ENCODE measurements at regions of chr6 and their contacts with region 1.

Region 1: DNA sequence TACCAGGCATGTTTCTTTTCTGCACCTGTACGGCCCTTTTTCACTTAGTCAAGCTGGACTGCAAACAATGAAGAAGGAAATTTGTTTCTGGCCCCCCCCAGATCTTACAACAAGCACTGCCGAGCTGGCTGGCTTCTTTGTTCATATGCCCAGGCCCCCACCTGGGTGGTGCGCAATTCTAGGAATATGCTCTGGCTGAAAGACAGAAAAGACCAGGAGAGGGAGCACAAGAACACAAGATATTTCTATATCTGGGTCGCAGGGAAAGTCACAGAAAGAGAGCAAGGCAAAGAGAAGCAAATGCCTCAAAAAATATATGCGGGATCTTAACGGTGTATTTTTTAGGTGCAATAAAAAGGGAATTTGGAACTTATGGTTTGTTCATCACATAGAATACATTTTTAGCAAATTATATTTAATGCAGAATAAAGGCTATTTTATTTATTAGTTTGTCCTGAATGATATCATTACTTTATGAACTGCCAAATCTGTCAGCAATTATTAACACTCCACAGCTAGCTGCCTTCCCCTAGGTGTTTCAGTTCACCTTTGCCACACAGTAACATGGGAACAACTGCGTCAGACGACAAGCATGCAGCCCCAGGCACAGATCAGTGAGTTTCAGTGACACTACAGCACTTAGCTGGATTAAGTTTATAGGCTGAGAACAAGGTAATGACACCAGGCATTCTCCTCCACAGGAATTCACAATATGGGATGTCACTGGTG is 76.5 kb downstream of the GJA10 start:
- DNase-seq: peak; percentile 37
- ATAC-seq: peak; percentile 89
- H3K4me3 ChIP-seq: no peak overlapping the region
- H3K27ac ChIP-seq: no peak overlapping the region
- H3K4me1 ChIP-seq: no peaks in the 10 kb centered on the region
- H3K27me3 ChIP-seq: peaks cover 2 to 23% of the 10 kb centered on the region in 2 experiments; a peak in 3 of 5 replicates
- CTCF ChIP-seq: peak; percentile 58
- EP300 ChIP-seq: no peak
- POLR2A ChIP-seq: no peak
- RAD21 ChIP-seq: no peak

Region 2: GRCh38 chr6:88492824-88493223 is 1477.9 kb before region 1 on chr6:
- CTCF ChIA-PET with region 1: no interaction called
- POLR2A ChIA-PET with region 1: no interaction called
- in situ Hi-C with region 1: no loop called
- intact Hi-C with region 1: no loop called
- DNase-seq: peak; percentile 18
- ATAC-seq: peak; percentile 50; the same call in 2 of the 3 replicates
- H3K4me3 ChIP-seq: no peak overlapping the region
- H3K27ac ChIP-seq: no peak overlapping the region
- H3K4me1 ChIP-seq: no peaks in the 10 kb centered on the region
- H3K27me3 ChIP-seq: no peaks in the 10 kb centered on the region; a peak in 1 of 5 replicates
- CTCF ChIP-seq: peak; percentile 56
- EP300 ChIP-seq: no peak
- POLR2A ChIP-seq: no peak
- RAD21 ChIP-seq: no peak

Region 3: GRCh38 chr6:90179190-90180169 is 208.7 kb after region 1 on chr6:
- CTCF ChIA-PET with region 1: no interaction called
- POLR2A ChIA-PET with region 1: no interaction called
- in situ Hi-C with region 1: no loop called
- intact Hi-C with region 1: loop called (anchors 10 kb)
- DNase-seq: no peak
- ATAC-seq: no peak
- H3K4me3 ChIP-seq: no peak overlapping the region
- H3K27ac ChIP-seq: no peak overlapping the region
- H3K4me1 ChIP-seq: no peaks in the 10 kb centered on the region
- H3K27me3 ChIP-seq: no peaks in the 10 kb centered on the region; a peak in 1 of 5 replicates
- CTCF ChIP-seq: 0 out of 2 replicates have a peak, but pooled peaks have one; percentile 16
- EP300 ChIP-seq: no peak
- POLR2A ChIP-seq: no peak
- RAD21 ChIP-seq: no peak

Region 4: GRCh38 chr6:90393232-90393884 is 422.6 kb after region 1 on chr6:
- CTCF ChIA-PET with region 1: no interaction called
- POLR2A ChIA-PET with region 1: no interaction called
- in situ Hi-C with region 1: no loop called
- intact Hi-C with region 1: loop called (anchors 1 kb)
- DNase-seq: peak; percentile 12
- ATAC-seq: peak; percentile 75
- H3K4me3 ChIP-seq: no peak overlapping the region
- H3K27ac ChIP-seq: no peak overlapping the region
- H3K4me1 ChIP-seq: no peaks in the 10 kb centered on the region
- H3K27me3 ChIP-seq: peaks cover 0 to 4% of the 10 kb centered on the region in 2 experiments; a peak in 1 of 5 replicates
- CTCF ChIP-seq: peak; percentile 67
- EP300 ChIP-seq: no peak
- POLR2A ChIP-seq: no peak
- RAD21 ChIP-seq: no peak

Measured in HepG2 (cell line).